Activated CD8-positive, alpha-beta T cell treated with anti-CD3 and anti-CD28 coated beads, Interleukin-2, amount 10 ng/mL, durations not matched to agents 7 days and 5 days (primary cell): ENCODE measurements at regions of chr10 and their contacts with region 1.

Region 1: DNA sequence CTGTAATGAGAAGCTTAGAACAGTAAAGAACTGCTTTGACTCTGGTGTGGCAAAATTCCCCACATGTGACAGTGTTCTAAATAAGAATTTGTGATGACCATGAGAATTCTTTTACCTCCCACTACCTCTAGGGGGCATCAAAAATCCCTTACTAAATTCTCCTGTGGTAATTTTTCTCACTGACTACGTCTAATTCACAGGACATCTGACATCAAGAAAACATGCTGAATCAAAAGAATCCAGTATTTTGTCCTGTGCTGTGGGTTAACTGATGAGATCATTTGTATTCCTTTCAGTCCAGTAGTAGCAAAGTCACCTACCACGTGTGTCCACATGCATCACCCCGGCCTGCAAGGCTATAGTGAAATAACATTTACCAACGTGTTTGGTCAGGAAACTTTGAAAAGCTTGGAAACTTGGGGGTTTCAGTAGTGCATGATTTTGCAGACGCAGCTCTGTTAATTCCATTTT is 103.8 kb downstream of the ATE1 start:
- DNase-seq: no peak
- ATAC-seq: no peak
- H3K4me3 Mint-ChIP-seq: no peak overlapping the region
- H3K27ac Mint-ChIP-seq: no peak overlapping the region
- H3K4me1 Mint-ChIP-seq: no peaks in the 10 kb centered on the region
- H3K27me3 Mint-ChIP-seq: no peaks in the 10 kb centered on the region

Region 2: DNA sequence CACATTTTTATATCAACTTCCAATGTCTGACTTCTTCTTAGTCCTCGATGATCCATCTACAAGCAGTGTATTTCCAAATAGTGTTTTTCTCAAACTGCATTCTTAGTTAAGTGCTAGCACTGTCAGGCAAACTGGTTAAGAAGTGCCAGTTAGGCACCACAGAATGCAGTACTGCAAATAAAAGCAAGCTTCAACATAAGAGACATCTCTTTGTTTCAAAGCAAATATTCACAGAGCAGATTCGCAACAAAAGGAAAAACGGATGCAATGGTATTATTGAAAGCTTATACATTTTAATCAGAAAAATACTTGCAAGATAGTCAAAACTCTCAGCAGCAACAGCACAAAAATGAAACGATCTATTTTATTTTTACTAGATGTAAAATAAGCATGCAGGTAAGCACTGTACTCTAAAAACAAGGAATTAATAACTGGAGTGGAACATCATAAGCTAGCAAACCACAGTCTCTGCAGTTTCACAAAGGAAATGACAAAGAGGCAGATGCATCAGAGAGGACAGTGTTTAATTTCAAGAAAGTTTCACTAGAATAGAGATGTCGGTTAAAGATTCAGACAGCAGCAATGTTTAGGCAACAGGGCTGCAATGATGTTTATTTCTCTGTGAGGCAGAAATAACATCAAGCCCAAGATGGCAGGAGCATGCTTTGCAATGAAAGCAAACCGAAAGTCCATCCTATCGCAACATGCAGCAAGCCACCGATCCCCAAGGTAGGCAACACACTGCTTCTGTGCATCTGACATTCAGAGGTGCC is 307.7 kb before region 1 on chr10:
- CTCF ChIA-PET with region 1: no interaction called
- POLR2A ChIA-PET with region 1: no interaction called
- DNase-seq: no peak
- ATAC-seq: no peak
- H3K4me3 Mint-ChIP-seq: no peak overlapping the region
- H3K27ac Mint-ChIP-seq: no peak overlapping the region
- H3K4me1 Mint-ChIP-seq: peaks cover 2% of the 10 kb centered on the region
- H3K27me3 Mint-ChIP-seq: no peaks in the 10 kb centered on the region

Region 3: GRCh38 chr10:121804460-121804859 is 19.6 kb before region 1 on chr10:
- CTCF ChIA-PET with region 1: interaction called, 11 read pairs
- POLR2A ChIA-PET with region 1: no interaction called
- DNase-seq: no peak
- ATAC-seq: no peak
- H3K4me3 Mint-ChIP-seq: no peak overlapping the region
- H3K27ac Mint-ChIP-seq: no peak overlapping the region
- H3K4me1 Mint-ChIP-seq: no peaks in the 10 kb centered on the region
- H3K27me3 Mint-ChIP-seq: no peaks in the 10 kb centered on the region

Region 4: GRCh38 chr10:121813857-121814256 is 10.2 kb before region 1 on chr10:
- CTCF ChIA-PET with region 1: interaction called, 12 read pairs
- POLR2A ChIA-PET with region 1: no interaction called
- DNase-seq: no peak
- ATAC-seq: no peak
- H3K4me3 Mint-ChIP-seq: no peak overlapping the region
- H3K27ac Mint-ChIP-seq: no peak overlapping the region
- H3K4me1 Mint-ChIP-seq: no peaks in the 10 kb centered on the region
- H3K27me3 Mint-ChIP-seq: no peaks in the 10 kb centered on the region

Region 5: GRCh38 chr10:121886997-121887622 is 63.1 kb after region 1 on chr10:
- CTCF ChIA-PET with region 1: interaction called, 50 read pairs
- POLR2A ChIA-PET with region 1: no interaction called
- DNase-seq: peak; percentile 69
- ATAC-seq: peak; percentile 82
- H3K4me3 Mint-ChIP-seq: no peak overlapping the region
- H3K27ac Mint-ChIP-seq: no peak overlapping the region
- H3K4me1 Mint-ChIP-seq: no peaks in the 10 kb centered on the region
- H3K27me3 Mint-ChIP-seq: no peaks in the 10 kb centered on the region

Region 6: GRCh38 chr10:121900443-121901174 is 76.6 kb after region 1 on chr10:
- CTCF ChIA-PET with region 1: interaction called, 10 read pairs
- POLR2A ChIA-PET with region 1: no interaction called
- DNase-seq: peak; percentile 32
- ATAC-seq: peak; percentile 42
- H3K4me3 Mint-ChIP-seq: no peak overlapping the region
- H3K27ac Mint-ChIP-seq: no peak overlapping the region
- H3K4me1 Mint-ChIP-seq: peaks cover 3% of the 10 kb centered on the region
- H3K27me3 Mint-ChIP-seq: no peaks in the 10 kb centered on the region